ENCODE measurements at regions of chr11 and their contacts with region 1.

Region 1: DNA sequence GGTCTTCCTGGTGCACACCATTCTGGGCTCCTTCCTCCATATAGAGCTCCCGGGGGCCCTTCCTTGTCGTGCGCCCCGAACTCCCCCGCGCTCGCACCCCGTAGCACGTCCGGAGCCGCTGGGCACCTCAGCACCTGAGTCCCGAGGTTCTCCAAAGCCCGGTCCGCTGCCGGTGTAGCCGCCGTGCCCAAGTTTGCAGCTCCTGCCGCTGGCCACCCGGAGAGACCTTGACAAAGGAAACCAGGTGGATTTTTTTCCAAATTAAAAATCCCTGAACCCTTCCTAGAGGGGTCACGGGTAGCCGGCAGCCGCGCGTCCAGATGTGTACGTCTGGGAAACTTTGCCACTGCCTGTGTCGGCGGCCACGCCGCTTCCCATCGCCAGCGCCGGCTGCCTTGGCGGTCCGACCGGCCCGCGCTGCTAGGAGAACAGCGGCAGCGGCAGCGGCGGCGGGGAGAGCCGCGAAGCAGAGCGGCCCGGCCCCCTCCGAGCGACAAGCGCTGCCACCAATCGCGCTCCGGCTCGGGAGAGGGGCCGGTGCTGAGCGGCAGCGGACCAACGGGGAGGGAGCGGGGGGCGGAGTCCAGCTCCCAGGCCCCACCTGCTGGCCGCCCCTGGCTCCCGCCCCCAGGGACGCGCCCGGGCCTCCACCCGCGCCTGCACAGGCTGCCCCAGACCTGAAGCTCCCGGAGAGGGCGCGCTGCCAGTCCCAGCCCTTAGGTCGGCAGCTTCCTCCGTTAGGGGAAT is at the start of gene GALNT18:
- DNase-seq: peak; percentile 68
- ATAC-seq: peak; percentile 94
- H3K4me3 ChIP-seq: peak within 1 kb of the TSS; percentile 88
- H3K27ac ChIP-seq: peak within 1 kb of the TSS; percentile 41
- H3K4me1 ChIP-seq: no peaks in the 10 kb centered on the region; the same call in 1 of the 2 replicates
- H3K27me3 ChIP-seq: no peaks in the 10 kb centered on the region; a peak in 1 of 4 replicates
- CTCF ChIP-seq: peak in 2 of 3 experiments; percentile 45 to 46; a peak in 4 of 6 replicates
- EP300 ChIP-seq: no peak
- POLR2A ChIP-seq: peak; percentile 79
- RAD21 ChIP-seq: no peak
- polyA plus RNA-seq, gene GALNT18: 1.2 to 2.0 TPM

Region 2: DNA sequence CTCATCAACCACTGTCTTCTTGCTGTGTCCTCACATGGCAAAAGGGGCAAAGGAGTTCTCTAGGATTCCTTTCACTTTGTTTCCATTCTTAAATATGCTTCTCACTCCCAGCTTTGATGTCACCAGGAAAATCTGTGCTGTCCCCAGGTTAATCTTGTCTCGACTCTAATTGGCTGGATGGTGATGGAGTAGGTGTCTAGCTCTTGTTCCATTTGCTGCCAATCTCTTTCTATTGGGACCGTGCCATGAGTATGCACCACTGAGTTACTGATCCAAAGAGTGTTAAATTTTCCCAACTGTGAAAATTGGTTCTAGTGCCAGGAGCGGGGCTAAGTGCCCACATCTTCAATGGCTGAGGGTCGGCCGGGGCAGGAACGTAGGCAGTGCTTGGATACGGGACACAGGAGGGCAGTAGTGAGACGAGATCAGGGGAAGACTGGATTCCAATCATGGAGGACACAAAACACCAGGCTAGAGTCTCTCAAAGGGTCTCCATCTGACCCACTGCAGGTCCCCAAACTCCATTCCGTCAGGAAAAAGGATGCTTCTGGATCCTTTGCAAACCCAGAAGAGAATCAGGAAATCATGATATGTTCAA is 221.0 kb before region 1 on chr11:
- CTCF ChIA-PET with region 1: interaction called, 11 read pairs
- POLR2A ChIA-PET with region 1: no interaction called
- RAD21 ChIA-PET with region 1: no interaction called
- SMC1A ChIA-PET with region 1: interaction called, 4 read pairs
- in situ Hi-C with region 1: no loop called
- intact Hi-C with region 1: no loop called
- DNase-seq: no peak
- ATAC-seq: peak; percentile 65
- H3K4me3 ChIP-seq: no peak overlapping the region
- H3K27ac ChIP-seq: no peak overlapping the region
- H3K4me1 ChIP-seq: no peaks in the 10 kb centered on the region
- H3K27me3 ChIP-seq: no peaks in the 10 kb centered on the region
- CTCF ChIP-seq: peak; percentile 19 to 41 (median 21); a peak in 2 of 6 replicates
- EP300 ChIP-seq: no peak
- POLR2A ChIP-seq: no peak
- RAD21 ChIP-seq: no peak

Region 3: GRCh38 chr11:11608783-11609232 is 12.9 kb before region 1 on chr11:
- CTCF ChIA-PET with region 1: interaction called, 10 read pairs
- POLR2A ChIA-PET with region 1: interaction called, 4 read pairs
- RAD21 ChIA-PET with region 1: interaction called, 3 read pairs
- SMC1A ChIA-PET with region 1: no interaction called
- in situ Hi-C with region 1: no loop called
- intact Hi-C with region 1: no loop called
- DNase-seq: no peak
- ATAC-seq: peak; percentile 23; the same call in 1 of the 3 replicates
- H3K4me3 ChIP-seq: no peak overlapping the region
- H3K27ac ChIP-seq: no peak overlapping the region
- H3K4me1 ChIP-seq: peaks cover 3% of the 10 kb centered on the region; the same call in 1 of the 2 replicates
- H3K27me3 ChIP-seq: no peaks in the 10 kb centered on the region
- CTCF ChIP-seq: no peak
- EP300 ChIP-seq: no peak
- POLR2A ChIP-seq: no peak
- RAD21 ChIP-seq: no peak

Region 4: GRCh38 chr11:12174477-12175143 is 552.9 kb after region 1 on chr11:
- CTCF ChIA-PET with region 1: no interaction called
- POLR2A ChIA-PET with region 1: no interaction called
- RAD21 ChIA-PET with region 1: no interaction called
- SMC1A ChIA-PET with region 1: no interaction called
- in situ Hi-C with region 1: no loop called
- intact Hi-C with region 1: no loop called
- DNase-seq: peak; percentile 81
- ATAC-seq: peak; percentile 84
- H3K4me3 ChIP-seq: no peak overlapping the region
- H3K27ac ChIP-seq: peak overlapping the region; percentile 85
- H3K4me1 ChIP-seq: peaks cover 15% of the 10 kb centered on the region
- H3K27me3 ChIP-seq: no peaks in the 10 kb centered on the region
- CTCF ChIP-seq: no peak
- EP300 ChIP-seq: peak; percentile 97 to 98
- POLR2A ChIP-seq: no peak
- RAD21 ChIP-seq: no peak

Measured in GM12878 (cell line).